Heart right ventricle (tissue), 16 donors: ENCODE measurements at regions of chr17 and their contacts with region 1.

Region 1: GRCh38 chr17:1455797-1456599 is at the start of gene CRK:
- DNase-seq: peak; percentile 96 to 99
- ATAC-seq: peak; percentile 92 to 97 (median 95)
- H3K4me3 ChIP-seq: peak within 1 kb of the TSS; percentile 73 to 100 (median 98)
- H3K27ac ChIP-seq: peak within 1 kb of the TSS; percentile 97 to 99 (median 98)
- H3K4me1 ChIP-seq: peaks cover 17 to 67% (median 55%) of the 10 kb centered on the region in 9 donors
- H3K27me3 ChIP-seq: peaks cover 0 to 4% (median 0%) of the 10 kb centered on the region in 7 donors
- CTCF ChIP-seq: peak in 2 of 9 donors; percentile 12 to 24
- total RNA-seq, gene CRK: 30.4 to 47.5 (median 37.9) TPM

Region 2: DNA sequence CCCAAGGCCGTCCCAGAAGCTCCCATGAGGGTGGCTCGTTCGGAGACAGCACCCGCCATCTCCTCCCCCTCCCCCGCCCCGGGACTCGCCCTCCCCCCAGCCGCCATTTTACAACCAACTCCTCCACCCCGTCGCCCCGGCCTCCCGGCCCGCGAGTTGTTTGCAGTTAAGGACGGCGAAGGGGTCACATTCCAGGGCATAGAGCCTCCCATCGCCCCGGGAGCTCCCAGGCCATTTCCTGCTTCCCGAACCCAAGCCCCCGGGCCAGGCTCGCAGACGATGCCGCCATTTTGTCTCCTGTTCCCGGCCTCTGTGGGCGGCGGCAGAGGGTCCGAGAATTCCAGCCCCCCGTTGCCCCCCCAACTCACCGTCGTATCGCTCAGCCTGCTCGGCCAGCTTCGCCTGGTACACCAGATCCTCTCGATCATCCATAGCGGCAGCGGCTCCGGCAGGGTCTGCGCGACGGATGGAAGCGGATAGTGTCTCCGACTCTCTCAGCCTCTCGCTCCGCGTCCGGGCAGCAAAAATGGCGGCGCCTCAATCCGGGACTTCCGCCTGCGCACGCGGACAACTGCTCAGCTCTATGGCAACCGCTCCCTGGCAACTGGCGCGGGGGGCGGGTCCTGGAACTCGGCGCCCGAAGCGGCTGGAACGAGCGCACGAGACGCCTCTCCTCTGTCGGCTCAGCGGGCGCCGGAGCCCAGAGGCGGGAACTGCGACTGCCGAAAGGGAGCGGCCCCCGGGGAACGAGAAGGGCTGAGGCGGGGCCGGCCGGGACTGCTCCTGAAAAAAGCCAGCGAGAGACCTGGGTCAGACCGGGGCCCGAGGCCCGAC is 56.1 kb before region 1 on chr17 and contains the start of gene YWHAE:
- intact Hi-C with region 1: loop called in 2 of 10 experiments (anchors 5 to 10 kb)
- DNase-seq: peak; percentile 98
- ATAC-seq: peak; percentile 97 to 98 (median 98)
- H3K4me3 ChIP-seq: peak within 1 kb of the TSS; percentile 67 to 94 (median 80)
- H3K27ac ChIP-seq: peak within 1 kb of the TSS; percentile 90 to 97 (median 96)
- H3K4me1 ChIP-seq: peaks cover 5 to 49% (median 42%) of the 10 kb centered on the region in 9 donors
- H3K27me3 ChIP-seq: no peaks in the 10 kb centered on the region
- CTCF ChIP-seq: no peak
- total RNA-seq, gene YWHAE: 600 to 791 (median 620) TPM

Region 3: GRCh38 chr17:1488030-1488863 is 32.2 kb after region 1 on chr17:
- intact Hi-C with region 1: loop called in 3 of 10 experiments (anchors 2 to 5 kb)
- DNase-seq: peak; percentile 91
- ATAC-seq: peak; percentile 59 to 75 (median 67)
- H3K4me3 ChIP-seq: peak overlapping the region; percentile 29 to 78 (median 72)
- H3K27ac ChIP-seq: peak overlapping the region; percentile 90 to 100 (median 98)
- H3K4me1 ChIP-seq: peaks cover 25 to 85% (median 74%) of the 10 kb centered on the region in 9 donors
- H3K27me3 ChIP-seq: peaks cover 0 to 48% (median 0%) of the 10 kb centered on the region in 7 donors
- CTCF ChIP-seq: peak in 3 of 9 donors; percentile 8 to 18 (median 14)